Motor neuron (in vitro differentiated cells): ENCODE measurements at regions of chr12 and their contacts with region 1.

Region 1: DNA sequence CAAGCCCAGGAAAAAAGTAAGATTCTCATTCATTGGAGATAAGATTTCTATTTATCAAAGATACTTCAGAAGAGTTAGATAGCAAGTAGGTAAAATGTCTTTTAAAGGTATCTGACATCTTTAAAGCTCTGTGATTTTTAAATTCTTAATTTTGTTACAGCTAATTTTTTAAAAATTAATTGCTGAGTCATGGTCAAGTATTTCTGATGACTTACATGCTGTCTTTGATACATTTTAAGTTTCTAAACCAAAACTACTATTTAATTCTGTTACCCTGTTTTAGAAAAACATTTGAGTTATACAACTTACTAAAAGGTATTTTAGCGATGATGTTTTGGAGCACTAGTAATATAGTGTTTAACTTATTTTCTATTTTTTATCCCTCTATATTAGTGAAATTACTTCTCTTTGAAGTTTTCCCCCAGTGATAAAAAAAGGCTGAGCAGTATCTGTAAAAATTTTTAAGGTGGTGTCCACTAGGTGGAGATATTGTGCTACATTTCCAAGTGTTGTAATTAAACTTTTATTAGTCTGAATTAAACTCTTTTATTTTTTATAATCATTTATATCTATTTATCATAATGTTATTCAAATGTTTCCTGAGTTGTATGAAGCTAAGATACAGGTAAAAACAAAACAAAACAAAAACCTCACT is 11.5 kb downstream of the ALG10 start:
- ATAC-seq: no peak
- H3K4me3 ChIP-seq: no peak overlapping the region
- H3K27ac ChIP-seq: no peak overlapping the region
- H3K4me1 ChIP-seq: no peaks in the 10 kb centered on the region

Region 2: GRCh38 chr12:34126239-34126641 is 92.5 kb after region 1 on chr12:
- in situ Hi-C with region 1: loop called in 1 of 9 experiments (anchors 25 kb)
- ATAC-seq: peak in 2 of 8 experiments; percentile 53 to 74
- H3K4me3 ChIP-seq: no peak overlapping the region
- H3K27ac ChIP-seq: no peak overlapping the region
- H3K4me1 ChIP-seq: no peaks in the 10 kb centered on the region

Region 3: GRCh38 chr12:34218165-34219045 is 184.7 kb after region 1 on chr12:
- in situ Hi-C with region 1: loop called in 2 of 9 experiments (anchors 25 kb)
- ATAC-seq: peak in 5 of 8 experiments; percentile 25 to 96 (median 91)
- H3K4me3 ChIP-seq: no peak overlapping the region
- H3K27ac ChIP-seq: no peak overlapping the region
- H3K4me1 ChIP-seq: no peaks in the 10 kb centered on the region